ENCODE measurements at regions of chr17 and their contacts with region 1.

Region 1: GRCh38 chr17:1186923-1187771 is 7.4 kb upstream of the ABR start:
- DNase-seq: peak; percentile 88 to 95 (median 94)
- ATAC-seq: peak; percentile 91 to 92
- H3K4me3 ChIP-seq: peak overlapping the region; percentile 27
- H3K27ac ChIP-seq: peak overlapping the region; percentile 75
- H3K4me1 ChIP-seq: peaks cover 15% of the 10 kb centered on the region
- H3K27me3 ChIP-seq: no peaks in the 10 kb centered on the region

Region 2: DNA sequence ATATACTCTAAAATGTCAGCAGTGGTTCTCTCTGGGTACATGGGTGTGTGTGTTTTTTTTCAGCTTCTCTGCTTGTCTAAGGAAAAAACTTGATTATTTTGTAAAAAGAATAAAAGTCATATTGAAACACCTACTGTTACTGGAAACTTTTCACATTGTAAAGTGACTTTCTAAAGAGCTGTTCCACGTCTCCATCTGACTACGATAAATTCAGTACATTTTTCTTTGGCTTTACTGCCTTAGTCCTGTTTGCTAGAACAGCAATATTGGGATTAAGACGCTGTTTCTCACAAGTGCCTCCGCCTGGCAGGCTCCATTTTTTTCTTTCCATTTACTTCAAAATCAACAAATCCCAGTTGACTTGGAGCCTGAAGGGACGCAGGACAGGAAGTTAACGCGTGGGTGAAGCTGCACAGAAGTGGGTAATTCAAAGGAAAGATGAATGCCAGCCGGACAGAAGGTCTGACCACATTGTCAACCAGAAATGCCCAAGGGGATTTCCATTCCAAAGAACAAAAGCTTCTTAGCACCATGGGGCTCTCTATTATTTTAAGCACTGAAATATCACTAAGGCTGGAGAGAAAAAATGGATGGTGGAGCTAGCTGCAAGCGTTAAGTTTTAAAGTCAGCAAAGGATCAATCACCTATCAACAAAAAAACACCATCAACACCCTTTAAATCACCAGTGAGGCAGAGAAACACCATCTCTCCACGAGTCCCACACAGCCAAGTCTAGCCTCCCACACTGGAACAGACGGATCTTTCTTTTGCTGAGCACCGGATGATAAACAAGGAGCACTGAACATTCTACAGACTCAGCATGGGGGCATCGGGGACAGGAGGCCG is 413.5 kb before region 1 on chr17:
- intact Hi-C with region 1: no loop called
- DNase-seq: no peak
- ATAC-seq: no peak
- H3K4me3 ChIP-seq: no peak overlapping the region
- H3K27ac ChIP-seq: no peak overlapping the region
- H3K4me1 ChIP-seq: no peaks in the 10 kb centered on the region
- H3K27me3 ChIP-seq: no peaks in the 10 kb centered on the region

Region 3: DNA sequence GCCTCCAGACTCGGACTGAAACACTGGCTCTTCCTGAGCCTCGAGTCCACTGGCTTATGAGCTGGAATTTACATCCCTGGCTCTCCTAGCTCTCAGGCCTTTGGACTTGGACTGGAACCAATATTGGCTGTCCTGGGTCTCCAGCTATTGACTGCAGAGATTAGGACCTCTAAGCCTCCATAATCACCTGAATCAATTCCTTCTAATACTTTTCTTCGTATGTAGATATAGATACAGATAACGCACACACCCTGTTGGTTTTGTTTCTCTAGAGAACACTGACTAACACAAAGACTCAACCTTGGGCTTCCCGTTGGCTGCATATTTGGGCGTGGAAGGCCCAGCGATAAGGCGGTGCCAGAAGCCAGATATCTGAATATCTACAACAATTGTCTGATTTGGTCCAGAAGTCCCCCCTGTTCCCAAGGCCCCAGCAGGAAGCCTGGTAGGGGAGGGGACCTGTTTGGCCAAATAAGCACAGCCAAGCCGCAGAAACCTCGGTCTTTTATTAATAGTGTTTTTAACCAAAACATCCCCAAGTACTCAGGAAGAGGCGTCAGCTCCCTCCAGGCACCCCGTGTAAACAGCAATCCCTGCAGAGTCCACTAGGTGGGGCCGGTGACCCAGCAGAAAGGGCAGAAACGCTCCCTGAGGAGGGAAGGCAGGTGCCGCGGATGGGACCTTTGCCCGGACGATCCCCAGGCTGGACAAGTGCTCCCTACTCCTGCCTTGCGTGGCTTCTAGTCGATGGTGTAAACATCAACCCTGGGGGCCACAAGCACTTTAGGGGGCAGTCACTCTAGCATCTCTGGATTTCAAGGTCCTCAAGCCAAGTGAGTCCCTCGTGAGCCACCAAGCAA is 64.4 kb before region 1 on chr17:
- intact Hi-C with region 1: loop called (anchors 2 to 10 kb)
- DNase-seq: peak; percentile 83 to 93 (median 93)
- ATAC-seq: peak; percentile 79 to 87
- H3K4me3 ChIP-seq: no peak overlapping the region
- H3K27ac ChIP-seq: peak overlapping the region; percentile 2
- H3K4me1 ChIP-seq: peaks cover 5% of the 10 kb centered on the region
- H3K27me3 ChIP-seq: no peaks in the 10 kb centered on the region

Region 4: DNA sequence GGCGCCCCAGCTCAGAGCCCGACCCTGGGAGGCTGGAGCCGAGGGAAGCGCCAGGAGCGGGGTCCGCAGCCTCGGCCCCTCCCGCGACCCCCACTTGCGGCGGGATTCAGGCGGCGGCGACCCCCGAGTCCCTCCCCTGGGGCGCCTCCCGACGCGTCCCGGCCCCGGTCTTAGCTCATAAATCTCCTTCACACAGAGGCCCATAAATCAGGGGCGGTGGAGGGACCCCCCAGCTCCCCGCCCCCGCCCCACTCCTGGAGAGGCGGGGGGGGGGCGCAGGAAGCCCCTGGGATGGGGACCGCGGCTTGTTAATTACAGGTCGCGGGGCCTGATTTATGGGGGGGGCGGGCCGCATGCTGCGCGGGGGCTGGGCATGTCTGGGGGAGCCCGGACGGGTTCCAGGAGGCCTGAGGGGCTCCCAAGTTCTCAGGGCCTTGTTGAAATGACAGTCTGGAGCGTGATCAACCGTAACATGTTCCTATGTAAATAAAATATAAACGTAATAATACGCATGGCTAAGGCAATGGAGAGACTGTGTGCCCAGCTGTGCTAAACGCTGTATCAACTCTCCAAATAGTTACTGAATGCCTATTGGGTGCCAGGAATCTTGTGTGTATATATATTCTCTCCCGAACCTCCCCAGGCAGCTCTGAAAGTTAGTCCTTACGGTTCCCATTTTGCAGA is 73.1 kb after region 1 on chr17:
- intact Hi-C with region 1: no loop called
- DNase-seq: peak in 1 of 3 donors; percentile 50
- ATAC-seq: peak; percentile 2 to 6
- H3K4me3 ChIP-seq: peak overlapping the region; percentile 44
- H3K27ac ChIP-seq: no peak overlapping the region
- H3K4me1 ChIP-seq: no peaks in the 10 kb centered on the region
- H3K27me3 ChIP-seq: no peaks in the 10 kb centered on the region